Left cardiac atrium (tissue), 4 donors: ENCODE measurements at regions of chr6 and their contacts with region 1.

Region 1: GRCh38 chr6:75208298-75209183 is 2.7 kb upstream of the COL12A1 start:
- DNase-seq: peak; percentile 82
- ATAC-seq: peak; percentile 59 to 70

Region 2: DNA sequence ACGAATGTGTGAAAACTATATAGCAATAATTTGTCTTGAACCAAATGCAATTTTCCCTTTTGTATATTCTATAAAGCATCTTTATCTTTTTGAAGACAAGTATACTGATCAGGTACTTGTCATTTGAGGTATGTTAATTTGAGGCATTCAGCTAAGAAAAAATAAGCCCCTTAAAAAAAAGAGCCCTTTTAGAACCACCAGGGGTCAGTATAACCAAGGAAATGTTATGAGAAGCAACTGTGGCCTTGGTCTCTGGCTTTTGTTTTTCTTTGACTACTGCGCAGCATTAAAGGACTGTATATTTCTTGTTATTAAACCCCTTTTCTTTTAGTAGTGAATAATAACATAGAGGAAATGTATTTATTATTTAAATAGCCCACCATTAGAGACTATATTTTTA is 1469.4 kb before region 1 on chr6:
- intact Hi-C with region 1: loop called (anchors 2 to 10 kb)
- DNase-seq: no peak
- ATAC-seq: peak; percentile 57 to 71

Region 3: GRCh38 chr6:73969971-73970970 is 1238.3 kb before region 1 on chr6:
- intact Hi-C with region 1: loop called (anchors 5 to 10 kb)
- DNase-seq: no peak
- ATAC-seq: peak in 1 of 2 donors; percentile 57

Region 4: DNA sequence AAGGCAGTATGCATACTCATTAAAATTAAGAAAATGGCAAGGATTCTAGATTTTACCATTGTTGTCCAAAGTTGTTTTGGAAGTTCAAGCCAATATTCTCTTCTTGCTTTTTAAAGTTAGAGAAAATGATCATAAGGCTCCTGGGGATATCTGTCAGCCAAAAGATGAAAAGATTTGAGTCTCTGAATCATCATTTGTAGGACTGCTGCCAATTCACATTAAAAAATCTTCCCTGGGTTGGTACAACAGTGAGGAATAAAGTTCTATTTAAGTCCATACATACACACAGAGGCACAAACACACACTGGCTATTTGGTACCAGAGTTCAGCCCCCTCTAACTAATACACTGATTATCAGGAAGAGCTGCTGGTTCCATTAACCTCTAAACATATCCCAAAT is 622.8 kb before region 1 on chr6:
- intact Hi-C with region 1: loop called in 1 of 2 experiments (anchors 10 kb)
- DNase-seq: no peak
- ATAC-seq: no peak

Region 5: DNA sequence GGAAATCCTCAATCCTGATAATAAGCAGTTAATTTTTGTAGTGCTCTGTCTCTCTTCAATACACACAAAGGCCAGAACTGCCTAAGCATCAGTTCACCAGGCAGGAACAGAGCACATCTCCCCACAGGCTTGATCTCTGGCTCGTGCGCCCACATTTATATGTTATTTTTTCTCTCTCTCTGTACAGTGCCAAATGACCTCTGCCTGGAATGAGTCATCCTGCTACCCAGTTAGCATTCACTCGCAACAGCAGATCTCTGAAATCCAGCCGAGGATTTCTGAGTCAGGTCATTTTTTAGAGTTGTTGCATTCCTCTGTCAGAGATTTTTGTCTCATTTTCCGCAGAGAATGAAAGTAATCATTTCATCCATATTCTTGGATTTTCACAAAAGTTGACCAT is 109.8 kb before region 1 on chr6:
- intact Hi-C with region 1: loop called in 1 of 2 experiments (anchors 10 kb)
- DNase-seq: peak; percentile 58
- ATAC-seq: peak; percentile 97 to 99